Activated T-helper 2 cell treated with anti-CD3 and anti-CD28 coated beads, Interferon-gamma antibody, Interleukin-2, Interleukin-4, amounts not matched to agents 10 μg/mL and 5 μg/mL and 100 μg/mL, durations not matched to agents 14 hours and 24 hours and 36 hours (primary cell): ENCODE measurements at regions of chr19 and their contacts with region 1.

Region 1: DNA sequence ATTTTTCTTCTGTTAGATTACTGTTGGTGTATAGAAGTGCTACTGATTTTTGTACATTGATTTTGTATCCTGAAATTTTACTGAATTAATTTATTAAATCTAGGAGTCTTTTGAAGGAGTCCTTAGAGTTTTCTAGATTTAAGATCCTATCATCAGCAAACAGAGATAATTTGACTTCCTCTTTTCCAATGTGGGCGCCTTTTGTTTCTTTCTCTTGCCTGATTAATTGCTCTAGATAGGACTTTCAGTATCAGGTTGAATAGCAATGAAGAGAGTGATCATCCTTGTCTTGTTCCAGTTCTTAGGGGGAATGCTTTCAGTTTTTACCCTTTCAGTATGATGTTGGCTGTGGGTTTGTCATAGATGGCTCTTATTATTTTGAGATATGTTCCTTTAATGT is 5.6 kb upstream of the CD33 start:
- DNase-seq: no peak
- H3K4me3 Mint-ChIP-seq: no peak overlapping the region
- H3K27ac Mint-ChIP-seq: no peak overlapping the region
- H3K4me1 Mint-ChIP-seq: peaks cover 28% of the 10 kb centered on the region
- H3K27me3 Mint-ChIP-seq: peaks cover 43% of the 10 kb centered on the region

Region 2: GRCh38 chr19:51247972-51248590 is 28.8 kb after region 1 on chr19:
- intact Hi-C with region 1: loop called (anchors 1 kb)
- DNase-seq: no peak
- H3K4me3 Mint-ChIP-seq: no peak overlapping the region
- H3K27ac Mint-ChIP-seq: no peak overlapping the region
- H3K4me1 Mint-ChIP-seq: peaks cover 52% of the 10 kb centered on the region
- H3K27me3 Mint-ChIP-seq: no peaks in the 10 kb centered on the region